Caco-2 (cell line): ENCODE measurements at regions of chr16 and their contacts with region 1.

Region 1: DNA sequence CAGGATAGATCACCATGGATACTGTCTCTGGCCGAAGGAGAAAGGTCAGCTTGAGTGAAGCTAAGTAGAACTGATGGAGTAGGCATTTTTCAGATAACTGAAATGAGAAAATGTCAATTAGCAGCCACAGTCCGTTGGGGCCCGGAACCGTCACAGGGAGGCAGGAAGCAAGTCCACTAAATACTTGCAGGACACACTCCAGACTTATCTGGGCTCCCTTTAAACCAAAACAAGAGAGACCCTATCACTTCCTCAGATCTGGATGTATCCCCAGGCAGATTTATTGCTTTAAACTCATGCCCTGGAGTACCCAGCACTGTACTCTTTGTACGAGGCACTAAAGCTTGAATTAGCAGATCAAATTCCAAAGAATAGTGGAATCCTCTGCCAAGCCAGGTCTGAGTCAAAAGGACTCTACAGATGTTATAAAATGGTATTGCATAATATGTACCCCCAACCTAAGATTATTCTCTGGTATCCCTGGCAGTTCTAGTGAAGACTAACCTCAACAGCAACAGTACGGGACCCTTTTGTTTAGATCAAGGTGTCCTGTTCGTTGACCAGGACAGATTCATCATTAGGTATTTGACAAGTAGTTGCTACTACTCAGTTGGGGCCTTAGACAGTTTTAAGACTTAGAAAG is 8.1 kb downstream of the ZP2 start:
- DNase-seq: no peak
- H3K4me3 ChIP-seq: no peak overlapping the region
- H3K4me3 Mint-ChIP-seq: no peak overlapping the region
- H3K27ac Mint-ChIP-seq: no peak overlapping the region
- H3K4me1 ChIP-seq: no peaks in the 10 kb centered on the region
- H3K4me1 Mint-ChIP-seq: peaks cover 7% of the 10 kb centered on the region
- H3K27me3 ChIP-seq: no peaks in the 10 kb centered on the region
- H3K27me3 Mint-ChIP-seq: no peaks in the 10 kb centered on the region
- CTCF ChIP-seq: no peak

Region 2: DNA sequence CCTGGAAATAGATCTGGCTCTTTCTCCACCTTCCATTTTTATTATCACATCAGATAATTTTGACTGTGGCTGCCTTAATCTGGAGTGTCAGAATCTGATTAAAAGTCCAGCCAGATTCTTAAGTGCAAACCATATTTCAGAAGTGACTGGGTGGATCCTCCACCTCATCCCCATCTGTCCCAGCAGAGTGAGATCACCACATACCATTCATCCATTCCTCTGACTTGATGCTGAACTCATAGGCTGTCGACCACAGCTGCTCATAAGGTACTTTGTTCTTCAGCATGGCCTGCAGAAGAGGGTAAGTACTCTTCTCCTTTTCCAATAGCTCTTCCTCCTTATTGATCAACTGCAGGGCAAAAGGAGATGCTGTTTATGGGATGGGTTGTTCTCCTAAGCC is 106.1 kb before region 1 on chr16:
- CTCF ChIA-PET with region 1: no interaction called
- POLR2A ChIA-PET with region 1: no interaction called
- intact Hi-C with region 1: no loop called
- DNase-seq: no peak
- H3K4me3 ChIP-seq: no peak overlapping the region
- H3K4me3 Mint-ChIP-seq: no peak overlapping the region
- H3K27ac Mint-ChIP-seq: no peak overlapping the region
- H3K4me1 ChIP-seq: no peaks in the 10 kb centered on the region
- H3K4me1 Mint-ChIP-seq: no peaks in the 10 kb centered on the region
- H3K27me3 ChIP-seq: no peaks in the 10 kb centered on the region
- H3K27me3 Mint-ChIP-seq: no peaks in the 10 kb centered on the region
- CTCF ChIP-seq: no peak

Region 3: GRCh38 chr16:21126518-21126917 is 76.8 kb before region 1 on chr16:
- CTCF ChIA-PET with region 1: no interaction called
- POLR2A ChIA-PET with region 1: no interaction called
- intact Hi-C with region 1: no loop called
- DNase-seq: no peak
- H3K4me3 ChIP-seq: no peak overlapping the region
- H3K4me3 Mint-ChIP-seq: no peak overlapping the region
- H3K27ac Mint-ChIP-seq: no peak overlapping the region
- H3K4me1 ChIP-seq: no peaks in the 10 kb centered on the region
- H3K4me1 Mint-ChIP-seq: no peaks in the 10 kb centered on the region
- H3K27me3 ChIP-seq: no peaks in the 10 kb centered on the region
- H3K27me3 Mint-ChIP-seq: peaks cover 13% of the 10 kb centered on the region
- CTCF ChIP-seq: no peak

Region 4: DNA sequence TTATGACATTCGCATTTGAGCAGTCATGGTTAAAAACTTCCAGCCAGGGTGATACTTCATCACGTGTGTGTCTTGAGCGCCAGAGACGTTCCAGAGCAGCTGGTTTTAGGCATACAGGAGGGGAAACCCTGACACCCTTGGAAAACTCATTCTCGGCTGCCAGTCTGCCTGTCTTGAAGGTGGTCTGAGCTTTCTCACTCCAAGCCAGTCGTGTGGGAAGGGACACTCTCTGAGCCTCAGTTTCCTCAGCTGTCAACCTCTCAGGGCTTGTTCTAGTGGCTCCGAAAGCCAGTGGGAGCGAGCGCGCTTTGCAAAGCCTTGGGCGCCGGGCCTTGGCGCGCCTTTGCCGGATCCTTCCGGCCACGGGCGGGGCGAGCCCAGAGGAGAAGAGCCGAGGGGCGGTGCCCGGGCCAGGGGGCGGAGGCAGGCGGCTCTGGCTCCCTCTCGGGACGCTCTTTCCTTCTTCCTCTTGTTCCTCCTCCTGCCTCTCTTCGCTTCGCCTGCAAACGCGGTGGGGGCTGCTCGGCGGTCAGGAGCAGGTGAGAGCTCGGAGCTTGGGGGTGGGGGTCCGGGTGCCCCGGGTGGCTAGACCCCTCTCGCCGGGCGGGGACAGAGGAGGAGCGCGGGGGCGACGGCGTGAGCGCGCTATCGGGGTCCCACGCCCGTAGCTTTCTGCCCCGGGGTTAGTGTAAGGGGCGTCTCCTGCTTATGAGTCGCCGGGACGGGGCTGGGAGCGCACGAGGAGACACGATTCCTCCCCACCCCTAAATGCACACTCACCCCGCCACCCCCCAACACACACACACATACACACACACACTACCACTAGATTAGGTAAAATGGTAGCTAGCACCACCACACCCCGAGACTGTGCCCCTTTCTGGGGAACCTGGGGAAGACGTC is 44.8 kb before region 1 on chr16 and contains the start of gene LDAF1:
- CTCF ChIA-PET with region 1: no interaction called
- POLR2A ChIA-PET with region 1: no interaction called
- intact Hi-C with region 1: no loop called
- DNase-seq: peak; percentile 80 to 86
- H3K4me3 ChIP-seq: peak within 1 kb of the TSS; percentile 74
- H3K4me3 Mint-ChIP-seq: peak within 1 kb of the TSS; percentile 99
- H3K27ac Mint-ChIP-seq: no peak within 1 kb of the TSS
- H3K4me1 ChIP-seq: no peaks in the 10 kb centered on the region
- H3K4me1 Mint-ChIP-seq: no peaks in the 10 kb centered on the region
- H3K27me3 ChIP-seq: no peaks in the 10 kb centered on the region
- H3K27me3 Mint-ChIP-seq: no peaks in the 10 kb centered on the region
- CTCF ChIP-seq: no peak
- total RNA-seq, gene LDAF1: 12.9 and 16.7 TPM in 2 replicates

Region 5: GRCh38 chr16:21277927-21278706 is 74.8 kb after region 1 on chr16 and contains the start of gene CRYM:
- CTCF ChIA-PET with region 1: no interaction called
- POLR2A ChIA-PET with region 1: no interaction called
- intact Hi-C with region 1: loop called (anchors 5 kb)
- DNase-seq: peak; percentile 54 to 71
- H3K4me3 ChIP-seq: peak within 1 kb of the TSS; percentile 34
- H3K4me3 Mint-ChIP-seq: peak within 1 kb of the TSS; percentile 75
- H3K27ac Mint-ChIP-seq: no peak within 1 kb of the TSS
- H3K4me1 ChIP-seq: no peaks in the 10 kb centered on the region
- H3K4me1 Mint-ChIP-seq: no peaks in the 10 kb centered on the region
- H3K27me3 ChIP-seq: no peaks in the 10 kb centered on the region
- H3K27me3 Mint-ChIP-seq: peaks cover 6% of the 10 kb centered on the region
- CTCF ChIP-seq: peak; percentile 73 to 89
- total RNA-seq, gene CRYM: 0.39 TPM in 1 of 2 replicates, not detected in the other